Activated CD4-positive, alpha-beta memory T cell treated with anti-CD3 and anti-CD28 coated beads, Interleukin-2, amount 10 ng/mL, durations not matched to agents 7 days and 5 days (primary cell): ENCODE measurements at regions of chr10 and their contacts with region 1.

Region 1: GRCh38 chr10:90912174-90912573 is 8.7 kb downstream of the ANKRD1 start:
- DNase-seq: no peak
- H3K4me3 Mint-ChIP-seq: no peak overlapping the region
- H3K27ac Mint-ChIP-seq: no peak overlapping the region
- H3K4me1 Mint-ChIP-seq: peaks cover 2% of the 10 kb centered on the region
- H3K27me3 Mint-ChIP-seq: peaks cover 2% of the 10 kb centered on the region

Region 2: DNA sequence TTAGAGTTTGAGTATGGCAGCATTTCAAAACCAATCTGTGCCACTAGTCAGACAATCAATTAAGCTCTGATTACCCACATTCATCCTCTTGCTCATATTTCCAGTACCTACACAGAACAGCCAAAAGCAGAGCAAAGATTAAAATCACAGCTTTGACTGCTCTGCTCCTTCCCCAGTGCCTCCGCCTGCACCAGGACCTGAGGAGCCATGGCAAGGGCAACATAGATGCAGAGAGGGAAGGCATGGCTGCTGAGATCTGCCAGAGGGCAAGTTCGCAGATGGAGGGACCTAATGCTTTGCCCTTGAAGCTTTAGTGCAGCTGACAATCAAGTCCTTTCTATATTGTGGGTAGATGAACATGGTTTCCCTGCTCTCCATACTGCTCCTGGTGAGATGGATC is 202.4 kb before region 1 on chr10:
- CTCF ChIA-PET with region 1: no interaction called
- POLR2A ChIA-PET with region 1: no interaction called
- DNase-seq: no peak
- H3K4me3 Mint-ChIP-seq: no peak overlapping the region
- H3K27ac Mint-ChIP-seq: no peak overlapping the region
- H3K4me1 Mint-ChIP-seq: no peaks in the 10 kb centered on the region
- H3K27me3 Mint-ChIP-seq: peaks cover 2% of the 10 kb centered on the region

Region 3: DNA sequence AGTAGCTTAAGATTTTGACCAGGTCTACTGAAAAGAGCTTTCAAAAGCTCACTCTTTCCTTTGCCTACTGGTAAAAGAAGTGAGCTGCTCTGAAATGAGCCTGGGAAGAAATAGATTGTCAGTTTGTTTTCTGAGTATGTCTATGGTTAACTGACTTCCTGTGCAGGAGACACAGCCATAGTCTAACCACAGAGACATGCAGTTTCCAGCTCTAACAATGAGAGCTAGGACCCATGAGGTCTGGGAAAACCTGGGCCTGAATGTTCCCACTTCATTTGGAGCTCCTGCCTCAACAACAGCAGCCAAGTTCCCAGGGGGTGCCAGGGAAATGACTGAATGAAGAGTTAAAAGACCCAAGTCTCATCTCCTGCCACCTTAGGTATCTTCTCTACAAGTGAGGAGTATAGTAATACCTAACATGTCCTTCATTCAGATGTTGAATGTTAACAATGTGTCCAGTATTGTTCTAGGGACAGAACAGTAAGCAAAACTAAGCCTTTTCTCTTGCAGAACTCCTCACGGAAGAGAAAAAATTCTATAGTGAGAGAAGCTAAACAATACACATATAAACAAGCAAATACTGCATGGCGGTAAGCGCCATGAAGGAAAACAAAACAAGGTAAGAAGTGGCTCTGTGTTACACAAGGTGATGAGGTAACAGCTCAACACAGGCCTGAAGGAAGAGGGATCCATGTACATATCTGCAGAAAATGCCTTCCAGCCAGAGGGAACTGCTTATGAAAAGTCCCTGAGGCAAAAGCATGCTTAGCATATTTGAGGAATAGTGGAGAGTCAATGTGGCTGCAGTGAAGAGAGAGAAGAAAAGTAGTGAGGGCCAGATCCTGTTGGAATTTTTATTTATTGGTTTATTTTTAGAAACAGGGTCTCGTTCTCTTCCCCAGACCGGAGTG is 35.1 kb after region 1 on chr10:
- CTCF ChIA-PET with region 1: interaction called, 11 read pairs
- POLR2A ChIA-PET with region 1: no interaction called
- DNase-seq: peak; percentile 17
- H3K4me3 Mint-ChIP-seq: no peak overlapping the region
- H3K27ac Mint-ChIP-seq: peak overlapping the region; percentile 52
- H3K4me1 Mint-ChIP-seq: peaks cover 17% of the 10 kb centered on the region
- H3K27me3 Mint-ChIP-seq: peaks cover 12% of the 10 kb centered on the region